ENCODE measurements at regions of chr10 and their contacts with region 1.

Region 1: GRCh38 chr10:63788152-63788821 is 267.1 kb downstream of the REEP3 start:
- DNase-seq: no peak
- ATAC-seq: no peak
- H3K4me3 ChIP-seq: no peak overlapping the region
- H3K27ac ChIP-seq: no peak overlapping the region
- H3K4me1 ChIP-seq: no peaks in the 10 kb centered on the region
- H3K27me3 ChIP-seq: no peaks in the 10 kb centered on the region
- CTCF ChIP-seq: no peak

Region 2: GRCh38 chr10:63528084-63528747 is 260.1 kb before region 1 on chr10:
- intact Hi-C with region 1: no loop called
- DNase-seq: no peak
- ATAC-seq: peak; percentile 37 to 64 (median 51)
- H3K4me3 ChIP-seq: no peak overlapping the region
- H3K27ac ChIP-seq: no peak overlapping the region
- H3K4me1 ChIP-seq: peaks cover 18% of the 10 kb centered on the region
- H3K27me3 ChIP-seq: no peaks in the 10 kb centered on the region
- CTCF ChIP-seq: no peak

Region 3: GRCh38 chr10:63977329-63977923 is 189.1 kb after region 1 on chr10:
- intact Hi-C with region 1: no loop called
- DNase-seq: no peak
- ATAC-seq: no peak
- H3K4me3 ChIP-seq: no peak overlapping the region
- H3K27ac ChIP-seq: no peak overlapping the region
- H3K4me1 ChIP-seq: no peaks in the 10 kb centered on the region
- H3K27me3 ChIP-seq: peaks cover 0 to 3% (median 0%) of the 10 kb centered on the region in 3 donors
- CTCF ChIP-seq: peak; percentile 15

Region 4: GRCh38 chr10:64846700-64847099 is 1058.4 kb after region 1 on chr10:
- intact Hi-C with region 1: loop called in 1 of 2 experiments (anchors 10 kb)
- DNase-seq: no peak
- ATAC-seq: no peak
- H3K4me3 ChIP-seq: no peak overlapping the region
- H3K27ac ChIP-seq: no peak overlapping the region
- H3K4me1 ChIP-seq: no peaks in the 10 kb centered on the region
- H3K27me3 ChIP-seq: no peaks in the 10 kb centered on the region
- CTCF ChIP-seq: no peak